ENCODE measurements at regions of chr7 and their contacts with region 1.

Region 1: GRCh38 chr7:112571852-112572607 is 91.2 kb downstream of the LSMEM1 start:
- DNase-seq: peak; percentile 45
- H3K4me3 ChIP-seq: peak overlapping the region; percentile 27
- H3K27ac ChIP-seq: peak overlapping the region; percentile 22
- H3K4me1 ChIP-seq: peaks cover 22% of the 10 kb centered on the region
- CTCF ChIP-seq: peak; percentile 70

Region 2: GRCh38 chr7:112584290-112584689 is 12.3 kb after region 1 on chr7:
- CTCF ChIA-PET with region 1: interaction called, 4 read pairs
- POLR2A ChIA-PET with region 1: interaction called, 17 read pairs
- intact Hi-C with region 1: no loop called
- DNase-seq: no peak
- H3K4me3 ChIP-seq: no peak overlapping the region
- H3K27ac ChIP-seq: no peak overlapping the region
- H3K4me1 ChIP-seq: no peaks in the 10 kb centered on the region
- CTCF ChIP-seq: no peak